ENCODE measurements at regions of chr3 and their contacts with region 1.

Region 1: DNA sequence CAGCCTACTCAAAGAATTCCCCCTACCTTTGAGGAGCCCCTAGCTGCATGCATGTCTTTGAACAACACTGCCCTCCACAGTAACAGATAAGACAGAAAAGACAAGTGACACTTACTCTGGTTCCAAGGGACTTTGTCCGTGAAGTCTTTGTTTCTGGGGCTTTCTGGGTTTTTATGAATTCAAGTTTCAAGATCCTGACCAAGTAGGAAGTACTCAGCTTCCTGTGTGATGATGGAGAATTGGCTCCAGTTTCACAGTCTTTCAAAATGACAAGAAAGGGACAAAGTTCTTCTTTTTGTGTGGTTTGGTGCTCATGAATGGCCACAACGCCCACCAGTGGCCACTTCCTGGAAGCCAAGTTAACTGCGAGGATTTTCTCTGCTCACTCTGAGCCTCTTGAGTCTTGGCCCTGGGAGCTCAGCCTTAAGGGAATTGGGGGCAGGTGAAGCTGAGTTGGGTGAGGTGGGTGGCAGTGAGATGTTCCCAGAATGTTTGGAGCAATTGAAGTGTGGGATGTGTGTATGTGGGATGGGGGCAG is at the start of gene CCR1:
- DNase-seq: peak; percentile 49 to 61
- H3K4me3 ChIP-seq: no peak within 1 kb of the TSS
- H3K4me3 Mint-ChIP-seq: peak within 1 kb of the TSS; percentile 27
- H3K27ac Mint-ChIP-seq: peak within 1 kb of the TSS; percentile 66
- H3K4me1 ChIP-seq: peaks cover 18% of the 10 kb centered on the region
- H3K4me1 Mint-ChIP-seq: peaks cover 9% of the 10 kb centered on the region
- H3K27me3 ChIP-seq: no peaks in the 10 kb centered on the region
- H3K27me3 Mint-ChIP-seq: no peaks in the 10 kb centered on the region
- CTCF ChIP-seq: peak; percentile 52 to 70
- total RNA-seq, gene CCR1: 1.7 and 2.9 TPM in 2 replicates

Region 2: DNA sequence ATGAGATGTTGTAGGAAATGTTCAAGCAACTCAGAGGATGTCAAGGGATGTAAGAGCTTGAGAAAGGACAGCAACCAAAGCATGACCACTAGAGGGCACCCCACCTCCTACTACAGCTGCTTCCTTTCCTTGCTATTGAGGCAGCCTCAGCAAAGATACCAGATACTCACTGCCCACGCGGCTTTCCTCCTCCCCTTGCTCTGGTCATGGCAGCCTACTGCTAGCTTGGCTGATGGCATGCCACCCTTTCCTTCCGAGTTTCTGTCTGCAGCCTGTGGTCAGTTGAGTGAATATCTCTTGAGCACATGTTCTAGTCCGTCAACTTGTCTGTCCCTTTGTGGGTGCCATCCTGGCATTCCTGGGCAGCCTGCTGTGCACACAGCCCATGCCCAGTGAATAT is 269.4 kb before region 1 on chr3:
- CTCF ChIA-PET with region 1: interaction called, 8 read pairs
- POLR2A ChIA-PET with region 1: no interaction called
- intact Hi-C with region 1: loop called (anchors 2 kb)
- DNase-seq: peak; percentile 78
- H3K4me3 ChIP-seq: no peak overlapping the region
- H3K4me3 Mint-ChIP-seq: no peak overlapping the region
- H3K27ac Mint-ChIP-seq: no peak overlapping the region
- H3K4me1 ChIP-seq: no peaks in the 10 kb centered on the region
- H3K4me1 Mint-ChIP-seq: peaks cover 14% of the 10 kb centered on the region
- H3K27me3 ChIP-seq: no peaks in the 10 kb centered on the region
- H3K27me3 Mint-ChIP-seq: no peaks in the 10 kb centered on the region
- CTCF ChIP-seq: peak; percentile 71 to 88

Region 3: DNA sequence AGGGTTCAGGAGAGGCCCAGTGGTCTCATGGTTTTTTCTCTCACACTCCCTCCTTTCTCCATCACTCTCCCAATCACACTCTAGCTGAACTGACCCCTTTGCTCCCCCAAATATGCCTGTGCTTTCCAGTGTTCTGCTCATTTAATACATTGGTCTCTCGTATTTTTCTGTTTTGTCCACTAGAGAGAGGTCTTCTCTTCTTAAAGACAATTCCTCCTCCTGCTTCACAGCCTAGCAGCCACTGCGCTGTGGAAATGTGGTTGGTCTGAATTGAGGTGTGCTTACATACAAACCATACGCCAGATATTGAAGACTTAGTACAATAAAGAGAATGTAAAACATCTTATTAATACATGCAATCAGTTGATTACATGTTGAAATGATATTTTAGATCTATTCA is 120.4 kb before region 1 on chr3:
- CTCF ChIA-PET with region 1: interaction called, 8 read pairs
- POLR2A ChIA-PET with region 1: interaction called, 3 read pairs
- intact Hi-C with region 1: loop called (anchors 1 kb)
- DNase-seq: peak; percentile 42 to 45
- H3K4me3 ChIP-seq: no peak overlapping the region
- H3K4me3 Mint-ChIP-seq: no peak overlapping the region
- H3K27ac Mint-ChIP-seq: no peak overlapping the region
- H3K4me1 ChIP-seq: peaks cover 9% of the 10 kb centered on the region; the same call in 1 of the 2 replicates
- H3K4me1 Mint-ChIP-seq: peaks cover 13% of the 10 kb centered on the region
- H3K27me3 ChIP-seq: no peaks in the 10 kb centered on the region
- H3K27me3 Mint-ChIP-seq: no peaks in the 10 kb centered on the region
- CTCF ChIP-seq: peak; percentile 15 to 25